Panc1 (cell line): ENCODE measurements at regions of chr15 and their contacts with region 1.

Region 1: DNA sequence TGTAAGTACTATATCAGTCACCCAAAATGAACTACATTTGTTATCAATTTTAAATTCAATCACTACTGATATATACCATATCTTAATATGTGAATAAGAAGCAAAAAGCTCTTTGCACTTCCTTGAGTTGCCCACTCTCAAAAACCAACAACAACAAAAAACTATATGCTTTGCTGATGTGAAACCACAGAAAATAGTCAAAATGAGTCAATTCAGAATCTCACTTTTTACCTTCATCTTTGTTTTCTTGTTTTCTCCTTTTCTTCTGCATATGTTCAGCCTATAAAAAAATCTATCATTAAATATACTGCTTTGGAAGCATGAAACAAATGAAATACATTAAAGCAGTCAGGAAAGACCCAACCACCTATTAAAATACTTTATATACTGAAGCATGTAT is 80.7 kb downstream of the UBR1 start:
- DNase-seq: no peak
- ATAC-seq: no peak
- H3K4me3 ChIP-seq: no peak overlapping the region
- H3K27ac ChIP-seq: no peak overlapping the region
- H3K4me1 ChIP-seq: no peaks in the 10 kb centered on the region
- H3K27me3 ChIP-seq: no peaks in the 10 kb centered on the region
- CTCF ChIP-seq: no peak

Region 2: GRCh38 chr15:42933886-42934667 is 91.1 kb before region 1 on chr15:
- CTCF ChIA-PET with region 1: no interaction called
- POLR2A ChIA-PET with region 1: no interaction called
- in situ Hi-C with region 1: no loop called
- intact Hi-C with region 1: no loop called
- DNase-seq: no peak
- ATAC-seq: no peak
- H3K4me3 ChIP-seq: no peak overlapping the region
- H3K27ac ChIP-seq: no peak overlapping the region
- H3K4me1 ChIP-seq: no peaks in the 10 kb centered on the region
- H3K27me3 ChIP-seq: no peaks in the 10 kb centered on the region
- CTCF ChIP-seq: no peak

Region 3: DNA sequence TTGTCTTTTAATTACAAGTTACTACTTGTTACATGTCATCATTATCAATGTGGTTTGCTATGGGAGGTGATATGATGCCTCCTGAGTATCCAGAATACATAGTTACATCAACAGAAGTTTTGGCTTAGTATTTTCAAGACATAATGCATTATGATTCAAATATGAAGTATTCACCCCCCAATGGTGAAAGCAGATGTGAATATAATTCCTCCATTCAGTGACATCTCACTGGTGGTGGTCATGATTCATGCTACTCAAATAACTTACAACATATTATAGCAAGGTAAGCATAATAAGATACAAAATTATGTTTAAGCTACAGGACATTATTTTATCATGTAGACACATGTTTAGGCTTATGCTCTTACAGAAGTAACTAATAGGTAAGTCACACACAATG is 69.6 kb before region 1 on chr15:
- CTCF ChIA-PET with region 1: no interaction called
- POLR2A ChIA-PET with region 1: interaction called, 18 read pairs
- in situ Hi-C with region 1: no loop called
- intact Hi-C with region 1: no loop called
- DNase-seq: no peak
- ATAC-seq: no peak
- H3K4me3 ChIP-seq: no peak overlapping the region
- H3K27ac ChIP-seq: no peak overlapping the region
- H3K4me1 ChIP-seq: no peaks in the 10 kb centered on the region
- H3K27me3 ChIP-seq: no peaks in the 10 kb centered on the region
- CTCF ChIP-seq: no peak

Region 4: GRCh38 chr15:43006991-43007390 is 18.2 kb before region 1 on chr15:
- CTCF ChIA-PET with region 1: interaction called, 11 read pairs
- POLR2A ChIA-PET with region 1: no interaction called
- in situ Hi-C with region 1: no loop called
- intact Hi-C with region 1: no loop called
- DNase-seq: no peak
- ATAC-seq: no peak
- H3K4me3 ChIP-seq: no peak overlapping the region
- H3K27ac ChIP-seq: no peak overlapping the region
- H3K4me1 ChIP-seq: no peaks in the 10 kb centered on the region
- H3K27me3 ChIP-seq: no peaks in the 10 kb centered on the region
- CTCF ChIP-seq: no peak

Region 5: GRCh38 chr15:43204016-43204901 is 179.1 kb after region 1 on chr15:
- CTCF ChIA-PET with region 1: interaction called, 12 read pairs
- POLR2A ChIA-PET with region 1: no interaction called
- in situ Hi-C with region 1: no loop called
- intact Hi-C with region 1: no loop called
- DNase-seq: no peak
- ATAC-seq: peak; percentile 72; the same call in 1 of the 2 replicates
- H3K4me3 ChIP-seq: no peak overlapping the region
- H3K27ac ChIP-seq: no peak overlapping the region
- H3K4me1 ChIP-seq: no peaks in the 10 kb centered on the region
- H3K27me3 ChIP-seq: peaks cover 3% of the 10 kb centered on the region; the same call in 1 of the 2 replicates
- CTCF ChIP-seq: peak; percentile 85